ENCODE measurements at regions of chr1 and their contacts with region 1.

Region 1: DNA sequence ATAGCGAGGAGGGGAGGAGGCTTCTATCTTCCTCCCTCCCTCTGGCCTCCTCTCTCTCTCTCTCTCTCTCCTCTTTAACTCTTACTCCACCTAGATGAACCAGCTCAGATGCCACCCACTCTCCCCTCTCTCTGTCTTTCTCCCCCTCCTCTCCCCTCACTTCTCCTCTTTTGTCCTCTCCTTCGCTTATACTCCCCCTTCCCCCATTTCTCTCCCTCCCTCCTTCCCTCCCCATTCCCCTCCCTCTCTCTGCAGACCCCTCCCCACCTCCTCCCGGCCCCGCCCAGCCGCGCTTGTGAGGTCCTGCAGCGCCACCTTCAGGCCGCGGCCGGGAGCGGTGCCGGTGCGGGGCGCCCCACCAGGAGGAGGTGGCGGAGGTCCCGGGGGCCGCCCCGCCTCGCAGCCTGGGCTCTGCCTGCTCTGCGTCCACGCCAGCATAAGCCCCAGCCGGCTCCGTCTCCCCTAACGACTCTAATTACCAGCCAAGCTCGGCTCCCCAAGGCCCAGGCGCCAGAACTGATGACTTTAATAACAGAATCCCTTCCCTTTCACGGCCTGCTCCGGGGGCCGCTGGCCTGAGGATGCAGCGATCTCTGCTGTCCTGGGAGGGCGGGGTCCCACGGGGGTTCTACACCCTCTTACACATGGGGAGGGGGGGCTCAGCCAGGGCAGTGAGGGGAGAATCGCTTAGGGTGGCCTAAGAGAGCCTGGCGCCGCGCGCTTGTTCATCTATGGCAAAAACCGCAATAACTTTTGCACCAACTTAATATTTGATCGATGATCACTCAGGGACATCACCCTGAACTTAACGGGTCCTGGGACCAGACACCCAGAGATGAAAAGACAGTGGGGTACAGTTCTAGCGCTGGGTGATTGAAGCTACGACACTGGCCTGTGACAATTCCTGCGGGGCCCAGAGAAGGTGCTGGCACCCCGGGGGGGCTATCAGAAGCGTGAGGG is 637.3 kb downstream of the MATN1 start:
- DNase-seq: peak in 6 of 7 donors; percentile 28 to 75 (median 43)
- H3K4me3 ChIP-seq: no peak overlapping the region
- H3K27ac ChIP-seq: no peak overlapping the region
- H3K4me1 ChIP-seq: peaks cover 8 to 13% of the 10 kb centered on the region in 2 donors
- H3K27me3 ChIP-seq: peaks cover 5% of the 10 kb centered on the region
- CTCF ChIP-seq: peak; percentile 38 to 78 (median 61)
- POLR2A ChIP-seq: no peak

Region 2: DNA sequence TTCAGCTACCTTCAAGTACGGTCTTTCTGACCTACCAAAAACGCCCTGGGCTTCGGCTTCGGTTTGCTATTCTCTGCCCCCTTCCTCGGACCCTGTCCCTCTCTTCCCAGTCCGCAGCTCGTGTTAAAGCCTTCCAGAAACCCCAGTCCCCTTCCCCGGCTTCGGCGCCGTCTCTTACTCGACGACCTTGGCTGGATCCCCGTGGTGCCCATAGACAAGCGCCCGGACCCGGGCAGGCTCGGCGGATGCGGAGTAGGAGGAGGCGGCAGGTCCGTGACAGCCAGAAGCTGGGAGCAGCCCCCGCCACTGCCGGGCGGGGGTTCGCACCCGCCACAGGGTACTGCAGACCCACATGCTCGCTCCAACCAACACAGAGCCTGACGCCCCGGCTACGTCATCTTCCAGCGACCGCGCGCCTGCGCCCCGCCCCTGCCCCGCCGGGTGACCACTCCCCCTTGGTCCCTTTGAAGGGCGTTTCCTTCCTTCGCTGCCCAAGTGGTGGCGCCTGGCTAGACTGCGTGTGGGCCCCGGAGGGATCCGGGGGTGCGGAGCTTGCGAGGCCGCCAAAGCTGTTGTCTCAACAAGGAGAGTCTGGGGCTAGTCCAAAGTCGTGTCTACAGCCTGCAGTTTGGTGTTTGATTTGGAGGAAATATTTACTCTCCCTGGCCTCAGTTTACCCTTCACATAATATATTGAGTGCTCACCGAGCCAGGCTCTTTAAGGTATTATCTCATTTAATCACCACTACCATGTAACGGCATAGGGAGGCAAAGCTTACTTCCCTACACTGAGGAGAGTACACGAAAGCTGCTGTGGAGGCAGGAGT is 855.3 kb before region 1 on chr1 and contains the start of gene MECR:
- intact Hi-C with region 1: loop called in 1 of 2 experiments (anchors 10 kb)
- DNase-seq: peak; percentile 92 to 97 (median 94)
- H3K4me3 ChIP-seq: peak within 1 kb of the TSS; percentile 3 to 97 (median 66)
- H3K27ac ChIP-seq: peak within 1 kb of the TSS in 4 of 5 donors; percentile 12 to 66 (median 50)
- H3K4me1 ChIP-seq: peaks cover 10 to 11% of the 10 kb centered on the region in 2 donors
- H3K27me3 ChIP-seq: no peaks in the 10 kb centered on the region
- CTCF ChIP-seq: peak in 1 of 6 experiments; percentile 9
- POLR2A ChIP-seq: peak; percentile 51 to 66
- total RNA-seq, gene MECR: 26.1 to 53.1 (median 33.0) TPM

Region 3: GRCh38 chr1:29909962-29910361 is 176.1 kb before region 1 on chr1:
- intact Hi-C with region 1: loop called in 1 of 2 experiments (anchors 5 kb)
- DNase-seq: no peak
- H3K4me3 ChIP-seq: no peak overlapping the region
- H3K27ac ChIP-seq: no peak overlapping the region
- H3K4me1 ChIP-seq: no peaks in the 10 kb centered on the region
- H3K27me3 ChIP-seq: peaks cover 6% of the 10 kb centered on the region
- CTCF ChIP-seq: no peak
- POLR2A ChIP-seq: no peak